ENCODE measurements at regions of chr2 and their contacts with region 1.

Region 1: DNA sequence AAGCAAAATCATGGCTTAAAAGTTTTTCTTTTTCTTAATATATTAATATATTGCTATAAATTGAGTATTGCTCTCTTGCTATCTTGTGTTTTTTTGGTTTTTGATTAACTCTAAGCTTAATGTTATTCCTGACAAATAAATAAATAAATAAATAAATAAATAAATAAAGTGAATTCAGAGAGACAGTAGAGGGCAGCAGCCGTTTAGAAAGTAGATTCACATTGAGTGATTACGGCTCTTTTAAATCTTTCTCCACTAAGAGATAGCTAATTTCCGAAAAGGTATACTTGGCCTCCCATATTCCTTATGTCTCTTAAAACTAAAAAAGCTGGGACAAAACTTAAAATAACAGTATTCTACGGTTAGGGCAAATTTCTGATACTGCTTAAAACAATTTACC is 34.3 kb downstream of the MSH2 start:
- DNase-seq: peak; percentile 64
- H3K4me3 ChIP-seq: no peak overlapping the region
- H3K27ac ChIP-seq: no peak overlapping the region
- H3K4me1 ChIP-seq: no peaks in the 10 kb centered on the region
- H3K27me3 ChIP-seq: no peaks in the 10 kb centered on the region
- CTCF ChIP-seq: peak; percentile 63
- EP300 ChIP-seq: no peak
- RAD21 ChIP-seq: peak; percentile 68

Region 2: GRCh38 chr2:47323009-47323821 is 114.1 kb before region 1 on chr2:
- CTCF ChIA-PET with region 1: no interaction called
- POLR2A ChIA-PET with region 1: no interaction called
- DNase-seq: peak; percentile 87
- H3K4me3 ChIP-seq: no peak overlapping the region; a peak in 1 of 4 replicates
- H3K27ac ChIP-seq: no peak overlapping the region
- H3K4me1 ChIP-seq: peaks cover 2 to 17% of the 10 kb centered on the region in 2 experiments; a peak in 1 of 4 replicates
- H3K27me3 ChIP-seq: no peaks in the 10 kb centered on the region
- CTCF ChIP-seq: peak; percentile 99
- EP300 ChIP-seq: no peak
- RAD21 ChIP-seq: peak; percentile 100

Region 3: GRCh38 chr2:47402805-47403608 is 34.3 kb before region 1 on chr2 and contains the start of gene MSH2:
- CTCF ChIA-PET with region 1: interaction called, 12 read pairs
- POLR2A ChIA-PET with region 1: no interaction called
- DNase-seq: peak; percentile 100
- H3K4me3 ChIP-seq: peak within 1 kb of the TSS; percentile 74 to 96
- H3K27ac ChIP-seq: peak within 1 kb of the TSS; percentile 50 to 74
- H3K4me1 ChIP-seq: peaks cover 6 to 11% of the 10 kb centered on the region in 2 experiments; a peak in 1 of 4 replicates
- H3K27me3 ChIP-seq: no peaks in the 10 kb centered on the region
- CTCF ChIP-seq: 0 out of 2 replicates have a peak, but pooled peaks have one; percentile 8
- EP300 ChIP-seq: no peak; a peak in 1 of 4 replicates
- RAD21 ChIP-seq: no peak; the same call in 1 of the 2 replicates
- polyA plus RNA-seq, gene MSH2: 13.7 and 16.4 TPM in 2 replicates

Region 4: GRCh38 chr2:47422560-47422959 is 14.7 kb before region 1 on chr2:
- CTCF ChIA-PET with region 1: interaction called, 24 read pairs
- POLR2A ChIA-PET with region 1: no interaction called
- DNase-seq: no peak
- H3K4me3 ChIP-seq: no peak overlapping the region
- H3K27ac ChIP-seq: peak overlapping the region in 1 of 2 experiments; percentile 52; a peak in 2 of 4 replicates
- H3K4me1 ChIP-seq: no peaks in the 10 kb centered on the region
- H3K27me3 ChIP-seq: no peaks in the 10 kb centered on the region
- CTCF ChIP-seq: no peak
- EP300 ChIP-seq: peak in 1 of 2 experiments; percentile 48; a peak in 1 of 4 replicates
- RAD21 ChIP-seq: no peak

Region 5: GRCh38 chr2:47460766-47461165 is 23.5 kb after region 1 on chr2:
- CTCF ChIA-PET with region 1: interaction called, 11 read pairs
- POLR2A ChIA-PET with region 1: no interaction called
- DNase-seq: no peak
- H3K4me3 ChIP-seq: no peak overlapping the region
- H3K27ac ChIP-seq: no peak overlapping the region
- H3K4me1 ChIP-seq: no peaks in the 10 kb centered on the region
- H3K27me3 ChIP-seq: no peaks in the 10 kb centered on the region
- CTCF ChIP-seq: no peak
- EP300 ChIP-seq: no peak
- RAD21 ChIP-seq: no peak

Region 6: GRCh38 chr2:47782671-47783485 is 345.6 kb after region 1 on chr2 and contains the start of gene MSH6:
- CTCF ChIA-PET with region 1: interaction called, 11 read pairs
- POLR2A ChIA-PET with region 1: interaction called, 3 read pairs
- DNase-seq: peak; percentile 100
- H3K4me3 ChIP-seq: peak within 1 kb of the TSS; percentile 65 to 95
- H3K27ac ChIP-seq: peak within 1 kb of the TSS; percentile 89 to 94
- H3K4me1 ChIP-seq: peaks cover 2 to 13% of the 10 kb centered on the region in 2 experiments; a peak in 3 of 4 replicates
- H3K27me3 ChIP-seq: no peaks in the 10 kb centered on the region
- CTCF ChIP-seq: 0 out of 2 replicates have a peak, but pooled peaks have one; percentile 9
- EP300 ChIP-seq: peak; percentile 5 to 25; a peak in 2 of 4 replicates
- RAD21 ChIP-seq: no peak
- polyA plus RNA-seq, gene MSH6: 16.4 and 16.6 TPM in 2 replicates